ENCODE measurements at regions of chr16 and their contacts with region 1.

Region 1: DNA sequence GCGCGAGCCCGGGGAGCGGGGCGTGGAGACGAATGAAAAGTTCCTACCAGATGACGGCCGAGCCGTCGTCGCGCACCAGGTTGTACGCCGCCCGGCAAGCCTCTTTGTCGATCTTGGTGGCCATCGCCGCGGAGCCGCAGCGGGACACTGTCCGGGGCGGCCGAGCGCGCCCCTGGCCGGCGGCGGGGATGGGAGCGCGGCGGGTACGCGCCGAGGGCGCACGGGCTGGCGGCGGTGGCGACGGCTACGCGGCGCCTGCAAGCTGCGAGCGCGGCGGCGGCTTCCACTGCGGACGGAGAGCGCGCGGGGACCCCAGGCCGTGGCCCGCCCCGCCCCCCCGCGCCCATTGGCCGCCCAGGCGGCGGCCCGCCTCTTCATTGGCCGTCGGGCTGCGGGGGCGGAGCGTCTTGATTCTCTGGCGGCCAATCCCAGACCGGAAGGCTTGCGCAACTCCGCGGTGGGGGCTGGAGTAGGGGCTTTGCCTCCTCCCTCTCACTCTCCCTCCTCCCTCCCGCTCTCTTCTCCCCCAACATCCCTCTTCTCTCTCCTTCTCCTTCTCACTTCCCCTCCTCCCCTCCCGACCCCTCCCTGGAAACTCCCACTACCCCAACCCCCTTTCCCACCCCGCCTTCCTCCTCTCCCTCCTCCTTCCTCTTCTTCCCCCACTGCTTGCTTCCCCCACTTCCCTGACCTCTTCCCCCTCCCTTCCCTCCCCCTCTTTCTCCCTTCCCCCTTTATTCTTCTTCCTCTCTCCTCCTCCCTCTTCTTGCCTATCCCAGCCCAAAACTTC is at the start of gene COTL1:
- DNase-seq: peak; percentile 97
- H3K4me3 ChIP-seq: peak within 1 kb of the TSS; percentile 68 to 83
- H3K27ac ChIP-seq: peak within 1 kb of the TSS; percentile 7 to 92; a peak in 3 of 4 replicates
- H3K4me1 ChIP-seq: peaks cover 13 to 24% of the 10 kb centered on the region in 2 experiments; a peak in 3 of 4 replicates
- H3K27me3 ChIP-seq: no peaks in the 10 kb centered on the region
- CTCF ChIP-seq: no peak
- EP300 ChIP-seq: 0 out of 4 replicates have a peak, but pooled peaks of 1 of the 2 experiments have one; percentile 31
- RAD21 ChIP-seq: no peak
- polyA plus RNA-seq, gene COTL1: 59.5 and 91.6 TPM in 2 replicates

Region 2: DNA sequence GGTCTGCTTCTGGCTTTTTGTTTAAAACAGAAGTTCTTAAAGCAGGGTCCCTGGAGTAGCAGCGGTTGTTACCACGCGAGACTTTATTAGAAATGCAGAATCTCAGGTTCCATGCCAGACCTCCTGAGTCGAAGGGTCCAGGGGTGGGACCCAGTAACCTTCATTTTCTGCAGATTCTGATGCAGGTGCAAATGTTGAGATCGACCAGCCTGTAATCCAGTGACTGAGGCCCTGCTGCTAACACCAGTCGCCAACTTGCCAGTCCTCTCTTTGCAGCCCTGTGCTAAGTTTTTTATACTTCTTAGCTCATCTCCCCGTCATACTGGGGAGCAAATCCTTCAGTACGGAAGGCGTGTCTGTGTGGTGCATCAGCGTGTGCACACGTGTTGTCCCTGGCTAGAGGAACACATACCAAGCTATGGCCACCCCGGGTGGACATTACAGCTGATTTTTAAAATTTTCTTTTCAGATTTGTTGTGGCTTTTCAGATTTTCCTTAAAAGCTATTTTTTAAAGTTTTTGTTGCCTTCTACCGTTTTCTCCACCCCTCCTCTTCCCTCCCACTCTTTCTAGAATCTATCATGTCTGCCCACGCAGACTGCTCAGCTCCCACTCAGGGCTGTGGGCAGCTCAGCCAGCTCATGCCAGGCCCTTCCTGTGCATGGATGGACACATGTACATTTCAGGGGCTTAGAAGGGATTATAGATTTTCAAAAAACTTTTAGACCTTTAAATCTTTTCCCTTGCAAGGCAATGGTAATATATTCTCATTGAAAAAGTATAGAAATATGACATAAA is 171.2 kb before region 1 on chr16:
- CTCF ChIA-PET with region 1: no interaction called
- POLR2A ChIA-PET with region 1: no interaction called
- DNase-seq: no peak
- H3K4me3 ChIP-seq: no peak overlapping the region
- H3K27ac ChIP-seq: no peak overlapping the region
- H3K4me1 ChIP-seq: peaks cover 0 to 5% of the 10 kb centered on the region in 2 experiments; a peak in 1 of 4 replicates
- H3K27me3 ChIP-seq: peaks cover 11% of the 10 kb centered on the region; the same call in 1 of the 2 replicates
- CTCF ChIP-seq: no peak
- EP300 ChIP-seq: no peak
- RAD21 ChIP-seq: no peak

Region 3: DNA sequence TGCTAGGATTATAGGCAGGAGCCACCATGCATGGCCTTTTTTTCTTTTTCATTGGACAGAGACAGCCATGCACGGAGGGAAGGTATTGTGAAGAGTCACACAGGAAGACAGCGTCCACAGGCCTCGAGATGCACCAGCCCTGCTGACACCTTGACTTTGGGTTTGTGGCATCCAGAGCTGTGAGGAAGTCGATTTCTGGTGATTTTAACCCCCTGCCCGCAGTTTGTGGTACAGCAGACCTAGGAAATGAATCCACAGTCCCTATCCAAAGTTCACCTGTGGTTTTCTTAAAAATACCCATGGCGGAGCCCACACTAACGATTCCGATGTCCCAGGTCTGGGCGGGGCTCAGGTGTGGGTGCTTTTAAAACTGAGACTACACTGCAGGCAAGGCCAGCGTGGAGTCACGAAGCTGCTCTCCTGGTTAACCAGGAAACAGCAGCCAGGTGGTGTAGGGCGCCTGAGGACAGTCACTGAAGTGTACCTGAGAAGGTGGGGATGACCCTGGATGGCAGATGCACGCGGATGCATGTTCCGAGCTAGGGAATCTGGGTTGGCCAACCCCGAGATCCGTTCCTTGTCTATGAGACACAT is 99.1 kb before region 1 on chr16:
- CTCF ChIA-PET with region 1: interaction called, 79 read pairs
- POLR2A ChIA-PET with region 1: no interaction called
- DNase-seq: no peak
- H3K4me3 ChIP-seq: no peak overlapping the region
- H3K27ac ChIP-seq: no peak overlapping the region
- H3K4me1 ChIP-seq: peaks cover 0 to 6% of the 10 kb centered on the region in 2 experiments; a peak in 1 of 4 replicates
- H3K27me3 ChIP-seq: no peaks in the 10 kb centered on the region
- CTCF ChIP-seq: no peak
- EP300 ChIP-seq: no peak
- RAD21 ChIP-seq: no peak

Region 4: GRCh38 chr16:84672276-84673202 is 54.6 kb after region 1 on chr16:
- CTCF ChIA-PET with region 1: interaction called, 23 read pairs
- POLR2A ChIA-PET with region 1: no interaction called
- DNase-seq: peak; percentile 82
- H3K4me3 ChIP-seq: no peak overlapping the region
- H3K27ac ChIP-seq: no peak overlapping the region
- H3K4me1 ChIP-seq: peaks cover 0 to 9% of the 10 kb centered on the region in 2 experiments; a peak in 3 of 4 replicates
- H3K27me3 ChIP-seq: no peaks in the 10 kb centered on the region
- CTCF ChIP-seq: peak; percentile 95
- EP300 ChIP-seq: no peak
- RAD21 ChIP-seq: peak; percentile 68

Region 5: DNA sequence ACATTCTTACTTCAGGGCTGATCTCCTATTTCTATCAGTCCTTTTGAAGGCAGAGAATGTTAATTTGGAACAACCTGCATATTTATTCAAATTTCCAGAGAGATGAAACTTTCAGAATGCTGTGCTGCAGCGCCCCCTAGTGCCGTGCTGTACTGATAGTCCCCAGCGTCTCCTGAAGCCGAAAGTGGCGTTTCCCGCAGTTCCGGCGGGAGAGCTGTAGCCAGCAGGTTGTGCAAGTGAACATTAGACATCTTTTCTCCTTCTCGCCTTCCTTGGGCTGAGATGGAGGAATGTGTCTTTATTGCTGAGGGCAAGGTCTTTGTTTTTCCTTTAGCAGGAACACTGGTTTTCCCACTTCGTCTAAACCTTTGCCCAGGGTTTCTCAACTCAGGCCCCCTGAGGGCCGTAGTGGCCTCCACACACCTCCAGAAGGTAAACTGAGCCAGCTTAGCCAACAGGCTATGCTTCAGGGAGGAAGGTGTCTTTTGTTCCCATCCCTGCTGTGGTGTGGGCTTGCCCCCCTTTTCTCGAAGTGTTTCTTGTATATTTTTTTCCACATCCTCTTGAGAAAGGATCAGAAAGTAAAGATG is 108.2 kb after region 1 on chr16:
- CTCF ChIA-PET with region 1: interaction called, 275 read pairs
- POLR2A ChIA-PET with region 1: no interaction called
- DNase-seq: peak; percentile 68
- H3K4me3 ChIP-seq: peak overlapping the region in 1 of 2 experiments; percentile 45; a peak in 1 of 4 replicates
- H3K27ac ChIP-seq: no peak overlapping the region
- H3K4me1 ChIP-seq: peaks cover 28 to 34% of the 10 kb centered on the region in 2 experiments; a peak in 3 of 4 replicates
- H3K27me3 ChIP-seq: no peaks in the 10 kb centered on the region
- CTCF ChIP-seq: peak; percentile 97
- EP300 ChIP-seq: no peak
- RAD21 ChIP-seq: peak; percentile 88

Region 6: GRCh38 chr16:84754353-84754856 is 136.4 kb after region 1 on chr16:
- CTCF ChIA-PET with region 1: interaction called, 21 read pairs
- POLR2A ChIA-PET with region 1: no interaction called
- DNase-seq: peak; percentile 62
- H3K4me3 ChIP-seq: peak overlapping the region in 1 of 2 experiments; percentile 4; a peak in 1 of 4 replicates
- H3K27ac ChIP-seq: no peak overlapping the region
- H3K4me1 ChIP-seq: no peaks in the 10 kb centered on the region; a peak in 1 of 4 replicates
- H3K27me3 ChIP-seq: no peaks in the 10 kb centered on the region
- CTCF ChIP-seq: peak; percentile 85
- EP300 ChIP-seq: no peak
- RAD21 ChIP-seq: peak; percentile 93